HEK293 (cell line): ENCODE measurements at regions of chr17 and their contacts with region 1.

Region 1: DNA sequence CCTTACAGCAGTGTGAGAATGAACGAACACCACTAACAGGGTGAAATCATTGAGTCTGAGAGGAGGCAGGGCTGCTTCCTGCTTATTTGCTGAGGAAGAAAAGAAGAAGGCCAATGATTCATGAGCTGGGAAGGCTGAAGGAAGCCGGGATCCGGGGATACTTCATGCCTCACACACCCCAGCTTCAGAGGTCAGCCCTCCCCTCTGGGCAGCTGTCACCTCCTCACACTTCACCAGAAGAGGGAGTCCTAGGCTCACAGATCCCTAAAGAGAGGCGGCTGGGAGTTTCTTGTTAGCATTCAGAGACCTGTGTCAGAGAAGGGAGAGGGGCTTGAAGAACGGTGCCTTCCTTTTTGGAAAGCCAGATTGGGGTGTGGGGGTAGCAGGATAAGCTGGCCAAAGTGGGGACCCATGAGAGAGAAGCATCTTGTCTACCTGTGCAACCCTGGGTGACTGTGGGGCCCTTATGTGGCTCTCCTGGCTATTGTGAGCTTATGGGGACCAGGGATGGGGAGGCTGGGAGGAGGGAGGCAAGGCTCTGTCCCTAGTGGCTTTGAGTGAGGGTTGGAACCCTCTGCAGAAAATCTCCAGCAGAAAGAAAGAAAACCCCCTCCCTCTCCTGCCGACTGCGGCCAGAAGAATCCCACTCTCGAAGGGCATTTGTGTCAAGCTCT is 94.6 kb downstream of the RGS9 start:
- H3K4me3 ChIP-seq: no peak overlapping the region
- H3K27ac ChIP-seq: no peak overlapping the region
- H3K4me1 ChIP-seq: peaks cover 2% of the 10 kb centered on the region; the same call in 1 of the 2 replicates
- CTCF ChIP-seq: peak; percentile 78

Region 2: DNA sequence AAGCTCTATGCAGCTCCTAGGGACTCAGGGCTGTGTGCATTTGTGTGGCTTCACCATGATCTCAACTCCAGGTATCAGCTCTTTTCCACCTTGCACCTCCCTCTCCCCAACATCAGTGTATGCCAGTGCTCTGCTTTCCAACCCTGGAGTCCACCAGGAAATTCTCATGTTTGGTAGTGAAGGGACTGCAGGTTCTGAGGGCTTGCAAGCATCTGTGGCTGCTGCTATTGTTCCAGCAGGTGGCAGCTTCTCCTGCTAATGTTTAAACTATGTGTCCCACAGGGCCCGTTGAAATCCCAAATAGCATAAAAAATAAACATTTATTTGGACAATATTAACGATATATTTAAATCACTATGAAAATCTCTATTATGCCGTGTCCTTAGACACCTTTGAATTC is 12.7 kb before region 1 on chr17:
- CTCF ChIA-PET with region 1: interaction called, 16 read pairs
- POLR2A ChIA-PET with region 1: no interaction called
- H3K4me3 ChIP-seq: no peak overlapping the region
- H3K27ac ChIP-seq: no peak overlapping the region
- H3K4me1 ChIP-seq: no peaks in the 10 kb centered on the region
- CTCF ChIP-seq: no peak

Region 3: DNA sequence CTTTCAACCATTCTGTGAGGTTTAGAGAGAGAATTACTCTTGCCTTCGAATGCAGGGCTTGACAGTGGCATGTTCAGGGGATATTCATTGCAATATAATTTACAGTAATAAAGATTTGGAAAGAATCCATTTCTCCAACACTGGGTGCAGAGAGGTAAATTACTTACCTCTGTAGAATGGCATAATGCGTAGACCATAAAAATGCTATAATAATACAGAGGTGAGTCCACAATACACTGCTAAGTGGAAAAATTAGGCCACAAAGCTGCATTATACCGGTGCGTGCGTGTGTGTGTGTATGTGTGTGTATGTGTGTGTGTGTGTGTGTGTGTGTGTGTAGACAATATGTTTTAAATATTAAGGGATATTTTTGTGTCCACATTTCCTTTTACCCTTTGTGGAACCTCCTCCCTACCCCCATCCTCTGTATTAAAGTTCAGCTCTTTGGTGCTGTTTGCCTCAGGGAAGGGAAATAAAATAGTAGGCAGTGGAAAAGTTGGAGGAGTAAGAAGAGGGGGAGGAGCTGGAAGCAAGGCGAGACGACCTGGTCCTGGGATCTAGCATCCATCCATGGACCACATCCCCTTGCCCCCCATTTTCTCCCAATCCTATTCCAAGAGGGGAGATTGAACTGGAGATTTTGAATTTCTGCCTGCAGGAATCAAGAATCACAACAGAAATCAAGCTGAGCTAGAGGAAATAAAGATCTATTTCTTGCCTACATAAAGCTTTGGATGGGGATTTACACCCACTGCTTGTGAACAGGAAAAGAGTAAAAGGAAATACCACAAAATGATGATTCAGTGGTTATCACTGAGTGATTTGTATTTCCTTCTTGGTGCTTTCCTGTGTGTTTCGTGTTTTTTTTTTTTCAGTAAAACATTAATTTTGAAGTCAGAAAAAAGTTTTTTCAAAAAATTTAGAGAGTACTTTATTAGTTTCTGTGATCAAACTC is 30.2 kb after region 1 on chr17:
- CTCF ChIA-PET with region 1: interaction called, 13 read pairs
- POLR2A ChIA-PET with region 1: no interaction called
- H3K4me3 ChIP-seq: no peak overlapping the region
- H3K27ac ChIP-seq: no peak overlapping the region
- H3K4me1 ChIP-seq: no peaks in the 10 kb centered on the region
- CTCF ChIP-seq: no peak

Region 4: DNA sequence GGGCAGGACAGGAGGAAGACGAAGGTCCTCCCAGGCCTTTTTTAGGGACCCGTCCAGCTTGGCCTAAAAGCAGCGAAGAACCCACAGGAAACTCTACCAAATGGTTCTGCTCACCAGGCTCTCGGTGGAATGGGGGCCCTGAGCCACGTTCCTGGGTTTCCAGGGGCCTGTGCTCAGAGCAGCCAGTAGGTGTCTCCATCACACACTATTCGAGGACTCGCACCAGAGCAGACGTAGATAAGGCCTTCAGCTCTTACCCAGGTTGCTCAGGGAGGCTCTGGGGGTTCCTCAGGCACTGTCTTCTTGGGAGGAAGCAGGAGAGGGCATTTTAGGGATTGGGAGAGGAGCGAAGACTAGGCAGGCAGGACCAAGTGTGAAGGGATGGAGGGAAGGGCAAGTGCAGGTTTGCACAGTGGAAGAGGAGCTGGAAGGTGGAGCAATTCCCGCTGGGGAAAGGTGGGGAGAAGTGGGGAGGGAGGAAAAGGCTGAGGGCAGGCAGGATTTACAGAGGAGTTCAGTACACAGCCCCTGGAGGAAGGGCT is 62.5 kb after region 1 on chr17:
- CTCF ChIA-PET with region 1: interaction called, 16 read pairs
- POLR2A ChIA-PET with region 1: no interaction called
- H3K4me3 ChIP-seq: no peak overlapping the region
- H3K27ac ChIP-seq: no peak overlapping the region
- H3K4me1 ChIP-seq: no peaks in the 10 kb centered on the region
- CTCF ChIP-seq: peak; percentile 68

Region 5: DNA sequence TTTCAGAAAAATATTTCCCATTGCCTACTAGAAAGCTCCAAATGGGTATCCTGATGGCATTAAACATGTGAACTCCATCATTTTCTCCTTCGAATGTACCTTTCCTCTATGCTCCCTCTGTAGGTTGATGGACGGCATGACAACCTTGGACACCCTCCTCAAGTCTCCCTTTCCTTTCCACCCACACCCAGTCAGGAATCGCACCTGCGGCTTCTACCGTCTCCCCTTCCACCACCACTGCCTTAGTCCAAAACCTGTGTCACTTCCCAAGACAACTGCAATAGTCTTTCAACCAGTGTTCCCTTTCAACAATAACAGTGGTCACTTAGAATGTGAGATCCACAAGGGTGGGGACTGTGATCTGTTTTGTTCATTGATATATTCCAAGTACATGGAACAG is 562.8 kb after region 1 on chr17:
- CTCF ChIA-PET with region 1: interaction called, 31 read pairs
- POLR2A ChIA-PET with region 1: no interaction called
- H3K4me3 ChIP-seq: no peak overlapping the region
- H3K27ac ChIP-seq: no peak overlapping the region
- H3K4me1 ChIP-seq: no peaks in the 10 kb centered on the region
- CTCF ChIP-seq: no peak

Region 6: GRCh38 chr17:66165513-66166123 is 933.8 kb after region 1 on chr17:
- CTCF ChIA-PET with region 1: interaction called, 46 read pairs
- POLR2A ChIA-PET with region 1: no interaction called
- H3K4me3 ChIP-seq: no peak overlapping the region
- H3K27ac ChIP-seq: no peak overlapping the region
- H3K4me1 ChIP-seq: no peaks in the 10 kb centered on the region
- CTCF ChIP-seq: 0 out of 2 replicates have a peak, but pooled peaks have one; percentile 13